Head of caudate nucleus (tissue), 42 donors: ENCODE measurements at regions of chr1 and their contacts with region 1.

Region 1: GRCh38 chr1:223802602-223803001 is 43.1 kb downstream of the TP53BP2 start:
- DNase-seq: peak in 22 of 42 donors; percentile 18 to 73 (median 47)

Region 2: GRCh38 chr1:223755992-223756775 is 46.4 kb before region 1 on chr1:
- intact Hi-C with region 1: loop called (anchors 10 kb)
- DNase-seq: peak; percentile 49 to 91 (median 82)

Region 3: GRCh38 chr1:223878598-223879325 is 76.2 kb after region 1 on chr1:
- intact Hi-C with region 1: no loop called
- DNase-seq: no peak